IMR-90 (cell line): ENCODE measurements at regions of chr4 and their contacts with region 1.

Region 1: DNA sequence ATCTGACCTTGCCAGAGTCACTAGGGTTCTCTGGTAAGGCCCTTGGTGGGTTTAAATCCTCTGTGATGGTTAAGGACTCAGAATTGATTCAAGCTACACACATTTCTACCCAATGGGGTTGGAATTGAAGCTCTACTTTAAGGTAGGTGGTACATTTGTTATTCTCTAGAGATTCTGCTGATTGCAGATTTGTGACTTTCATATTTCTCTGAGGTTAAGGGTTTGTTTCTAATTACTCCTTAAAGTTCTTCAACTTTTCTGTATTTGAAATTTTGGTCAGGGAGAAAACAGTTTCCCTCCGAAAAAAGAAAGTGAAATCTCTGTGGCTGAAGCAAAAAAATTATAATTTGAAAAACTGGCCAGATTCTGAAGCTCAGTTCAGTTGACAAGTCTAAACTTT is 25.8 kb upstream of the USP46 start:
- DNase-seq: no peak
- ATAC-seq: no peak
- H3K4me3 ChIP-seq: no peak overlapping the region
- H3K27ac ChIP-seq: no peak overlapping the region
- H3K4me1 ChIP-seq: no peaks in the 10 kb centered on the region
- H3K27me3 ChIP-seq: no peaks in the 10 kb centered on the region; the same call in none of the 2 replicates
- CTCF ChIP-seq: no peak
- POLR2A ChIP-seq: no peak
- RAD21 ChIP-seq: no peak

Region 2: GRCh38 chr4:52312714-52313113 is 372.2 kb before region 1 on chr4:
- CTCF ChIA-PET with region 1: no interaction called
- POLR2A ChIA-PET with region 1: no interaction called
- dilution Hi-C with region 1: no loop called
- in situ Hi-C with region 1: no loop called
- intact Hi-C with region 1: no loop called
- DNase-seq: no peak
- ATAC-seq: no peak
- H3K4me3 ChIP-seq: no peak overlapping the region
- H3K27ac ChIP-seq: no peak overlapping the region
- H3K4me1 ChIP-seq: no peaks in the 10 kb centered on the region
- H3K27me3 ChIP-seq: no peaks in the 10 kb centered on the region
- CTCF ChIP-seq: no peak
- POLR2A ChIP-seq: no peak
- RAD21 ChIP-seq: no peak

Region 3: GRCh38 chr4:52376132-52376704 is 308.7 kb before region 1 on chr4:
- CTCF ChIA-PET with region 1: no interaction called
- POLR2A ChIA-PET with region 1: no interaction called
- dilution Hi-C with region 1: no loop called
- in situ Hi-C with region 1: no loop called
- intact Hi-C with region 1: no loop called
- DNase-seq: peak; percentile 47
- ATAC-seq: peak; percentile 48
- H3K4me3 ChIP-seq: no peak overlapping the region
- H3K27ac ChIP-seq: no peak overlapping the region
- H3K4me1 ChIP-seq: no peaks in the 10 kb centered on the region
- H3K27me3 ChIP-seq: peaks cover 9% of the 10 kb centered on the region
- CTCF ChIP-seq: peak; percentile 66
- POLR2A ChIP-seq: no peak
- RAD21 ChIP-seq: peak; percentile 69

Region 4: DNA sequence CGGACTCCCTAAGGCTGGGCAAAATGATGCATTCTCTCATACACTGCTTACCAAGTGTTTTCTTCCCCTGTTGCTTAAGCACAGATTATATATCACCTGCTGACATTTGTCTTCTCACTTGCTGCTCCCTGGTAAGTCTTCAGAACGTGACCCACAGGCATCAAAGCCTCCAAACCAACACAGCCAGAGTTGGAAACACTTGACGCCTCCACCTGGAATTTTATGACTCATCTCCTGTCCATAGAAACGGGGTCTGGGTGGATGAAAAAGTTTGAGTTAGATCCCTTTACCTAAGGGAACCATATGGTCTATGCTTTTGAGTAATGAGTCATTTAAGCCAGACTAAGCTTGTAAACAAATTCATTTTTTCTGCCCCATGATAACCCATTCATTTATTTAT is 277.4 kb before region 1 on chr4:
- CTCF ChIA-PET with region 1: no interaction called
- POLR2A ChIA-PET with region 1: no interaction called
- dilution Hi-C with region 1: no loop called
- in situ Hi-C with region 1: no loop called
- intact Hi-C with region 1: loop called (anchors 10 kb)
- DNase-seq: no peak
- ATAC-seq: no peak
- H3K4me3 ChIP-seq: no peak overlapping the region
- H3K27ac ChIP-seq: no peak overlapping the region
- H3K4me1 ChIP-seq: no peaks in the 10 kb centered on the region
- H3K27me3 ChIP-seq: no peaks in the 10 kb centered on the region
- CTCF ChIP-seq: no peak
- POLR2A ChIP-seq: no peak
- RAD21 ChIP-seq: no peak

Region 5: GRCh38 chr4:53005149-53005546 is 320.3 kb after region 1 on chr4:
- CTCF ChIA-PET with region 1: no interaction called
- POLR2A ChIA-PET with region 1: no interaction called
- dilution Hi-C with region 1: no loop called
- in situ Hi-C with region 1: no loop called
- intact Hi-C with region 1: no loop called
- DNase-seq: no peak
- ATAC-seq: no peak
- H3K4me3 ChIP-seq: no peak overlapping the region
- H3K27ac ChIP-seq: no peak overlapping the region
- H3K4me1 ChIP-seq: no peaks in the 10 kb centered on the region; the same call in 1 of the 2 replicates
- H3K27me3 ChIP-seq: no peaks in the 10 kb centered on the region
- CTCF ChIP-seq: no peak
- POLR2A ChIP-seq: no peak
- RAD21 ChIP-seq: no peak

Region 6: GRCh38 chr4:53777244-53777984 is 1092.5 kb after region 1 on chr4:
- CTCF ChIA-PET with region 1: no interaction called
- POLR2A ChIA-PET with region 1: no interaction called
- dilution Hi-C with region 1: no loop called
- in situ Hi-C with region 1: no loop called
- intact Hi-C with region 1: no loop called
- DNase-seq: peak; percentile 92
- ATAC-seq: peak; percentile 49
- H3K4me3 ChIP-seq: no peak overlapping the region
- H3K27ac ChIP-seq: peak overlapping the region; percentile 46; the same call in 1 of the 2 replicates
- H3K4me1 ChIP-seq: peaks cover 25% of the 10 kb centered on the region
- H3K27me3 ChIP-seq: no peaks in the 10 kb centered on the region
- CTCF ChIP-seq: no peak
- POLR2A ChIP-seq: no peak
- RAD21 ChIP-seq: no peak